WTC11 (cell line): ENCODE measurements at regions of chr10 and their contacts with region 1.

Region 1: DNA sequence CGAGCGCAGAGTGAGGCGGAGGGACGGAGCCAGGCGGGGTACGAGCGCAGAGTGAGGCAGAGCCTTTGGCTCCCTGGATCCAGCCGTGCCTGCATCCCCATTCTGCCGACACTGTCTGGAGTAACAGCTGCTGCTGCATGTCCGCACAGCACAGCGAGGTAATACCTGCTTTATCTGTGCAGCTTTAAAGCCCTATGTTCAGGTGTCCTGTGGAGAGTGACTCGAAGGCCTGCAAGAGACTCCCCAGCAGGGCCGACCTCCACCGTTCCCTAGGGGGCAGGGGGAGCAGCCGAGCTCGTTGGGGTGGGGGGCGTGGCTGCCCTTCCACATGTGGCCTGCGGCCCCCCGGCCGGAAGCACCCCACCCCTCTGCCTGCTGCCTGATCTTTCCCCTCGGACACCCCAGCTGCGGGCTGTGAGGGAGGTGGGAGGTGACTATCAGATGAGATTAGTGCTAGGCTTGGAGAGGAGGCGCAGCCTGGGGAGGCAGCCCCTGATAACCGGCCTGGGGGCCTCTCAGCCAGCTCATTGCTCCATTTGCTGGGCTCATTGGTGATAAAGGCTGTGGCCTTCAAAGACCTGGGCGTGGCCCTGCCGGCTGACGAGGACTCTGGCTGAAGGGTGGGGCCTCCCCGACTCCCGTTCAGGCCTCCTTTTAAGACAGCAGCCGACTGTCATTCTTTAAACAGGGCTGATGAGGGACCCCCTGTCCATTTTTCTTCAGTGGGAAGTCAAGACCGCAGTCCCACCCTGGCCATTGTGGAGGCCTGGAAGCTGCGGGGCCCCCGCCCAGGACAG is 8.0 kb downstream of the VENTX start:
- DNase-seq: no peak
- ATAC-seq: no peak
- H3K4me3 Mint-ChIP-seq: no peak overlapping the region
- H3K27ac Mint-ChIP-seq: no peak overlapping the region
- H3K4me1 Mint-ChIP-seq: peaks cover 40% of the 10 kb centered on the region
- H3K27me3 Mint-ChIP-seq: no peaks in the 10 kb centered on the region
- CTCF ChIP-seq: no peak

Region 2: GRCh38 chr10:133210398-133211140 is 35.1 kb before region 1 on chr10:
- CTCF ChIA-PET with region 1: no interaction called
- POLR2A ChIA-PET with region 1: no interaction called
- DNase-seq: no peak
- ATAC-seq: no peak
- H3K4me3 Mint-ChIP-seq: no peak overlapping the region
- H3K27ac Mint-ChIP-seq: no peak overlapping the region
- H3K4me1 Mint-ChIP-seq: no peaks in the 10 kb centered on the region
- H3K27me3 Mint-ChIP-seq: no peaks in the 10 kb centered on the region
- CTCF ChIP-seq: no peak

Region 3: GRCh38 chr10:133267829-133268228 is 22.2 kb after region 1 on chr10:
- CTCF ChIA-PET with region 1: interaction called, 20 read pairs
- POLR2A ChIA-PET with region 1: interaction called, 3 read pairs
- DNase-seq: peak; percentile 44
- ATAC-seq: peak; percentile 49
- H3K4me3 Mint-ChIP-seq: no peak overlapping the region
- H3K27ac Mint-ChIP-seq: no peak overlapping the region
- H3K4me1 Mint-ChIP-seq: no peaks in the 10 kb centered on the region
- H3K27me3 Mint-ChIP-seq: peaks cover 13% of the 10 kb centered on the region
- CTCF ChIP-seq: no peak

Region 4: GRCh38 chr10:133278577-133279265 is 33.1 kb after region 1 on chr10:
- CTCF ChIA-PET with region 1: interaction called, 23 read pairs
- POLR2A ChIA-PET with region 1: no interaction called
- DNase-seq: no peak
- ATAC-seq: no peak
- H3K4me3 Mint-ChIP-seq: no peak overlapping the region
- H3K27ac Mint-ChIP-seq: peak overlapping the region; percentile 57
- H3K4me1 Mint-ChIP-seq: peaks cover 6% of the 10 kb centered on the region; the same call in 1 of the 2 replicates
- H3K27me3 Mint-ChIP-seq: no peaks in the 10 kb centered on the region
- CTCF ChIP-seq: no peak

Region 5: GRCh38 chr10:133308421-133309110 is 62.9 kb after region 1 on chr10 and contains the starts of genes TUBGCP2 and ZNF511:
- CTCF ChIA-PET with region 1: interaction called, 16 read pairs
- POLR2A ChIA-PET with region 1: no interaction called
- DNase-seq: peak; percentile 78
- ATAC-seq: peak; percentile 58
- H3K4me3 Mint-ChIP-seq: peak within 1 kb of the TSS; percentile 97
- H3K27ac Mint-ChIP-seq: peak within 1 kb of the TSS; percentile 93
- H3K4me1 Mint-ChIP-seq: peaks cover 15% of the 10 kb centered on the region
- H3K27me3 Mint-ChIP-seq: no peaks in the 10 kb centered on the region
- CTCF ChIP-seq: no peak
- total RNA-seq, gene TUBGCP2: 53.2 to 62.5 TPM (median 53.8 TPM) in 3 replicates
- total RNA-seq, gene ZNF511: 69.6 to 86.4 TPM (median 73.2 TPM) in 3 replicates

Region 6: GRCh38 chr10:133318494-133319127 is 73.0 kb after region 1 on chr10:
- CTCF ChIA-PET with region 1: no interaction called
- POLR2A ChIA-PET with region 1: no interaction called
- DNase-seq: peak; percentile 86
- ATAC-seq: peak; percentile 98
- H3K4me3 Mint-ChIP-seq: peak overlapping the region; percentile 58
- H3K27ac Mint-ChIP-seq: no peak overlapping the region
- H3K4me1 Mint-ChIP-seq: 0 out of 2 replicates have a peak, but pooled peaks cover 3% of the 10 kb centered on the region
- H3K27me3 Mint-ChIP-seq: peaks cover 26% of the 10 kb centered on the region
- CTCF ChIP-seq: peak; percentile 74

Region 7: DNA sequence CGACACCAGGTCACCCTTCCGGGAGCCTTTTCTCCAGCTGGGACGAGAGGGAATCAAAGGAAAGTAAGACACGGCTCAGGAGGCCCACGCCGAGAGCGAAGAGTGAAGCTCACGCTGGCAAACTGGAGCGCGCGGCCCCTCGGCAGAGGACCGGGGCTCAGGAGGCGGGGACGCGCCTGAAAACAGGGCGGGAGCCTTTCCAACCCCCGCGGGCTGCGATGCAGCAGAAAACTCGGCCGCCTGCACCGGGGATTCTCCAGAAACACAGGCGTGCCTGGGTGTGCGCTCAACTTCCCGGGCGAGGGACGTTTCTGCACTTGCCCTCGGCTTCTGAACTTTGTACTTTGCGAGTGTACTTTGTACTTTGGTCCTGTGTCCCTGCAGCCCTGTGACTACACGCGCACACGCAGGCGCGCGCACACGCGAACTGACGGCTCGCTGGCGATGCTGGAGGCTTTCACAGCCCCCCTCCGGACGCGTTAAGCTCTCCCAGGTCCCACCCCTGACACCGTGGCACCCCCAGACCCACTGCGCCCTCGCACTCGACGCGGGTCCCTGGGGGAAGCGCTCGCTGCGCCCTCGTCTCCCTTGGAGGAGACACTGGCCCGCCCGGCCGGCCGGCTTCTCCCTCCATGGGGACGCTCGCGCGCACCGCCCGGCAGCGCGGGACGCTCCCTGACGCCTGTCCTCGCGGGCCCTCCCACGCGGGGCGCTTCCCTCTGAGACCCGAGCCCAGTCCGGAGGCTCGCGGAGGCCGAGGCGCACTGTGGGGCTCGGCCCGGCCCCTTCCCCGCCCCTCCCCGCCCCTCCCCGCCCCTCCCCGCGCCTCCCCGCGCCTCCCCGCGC is 132.8 kb after region 1 on chr10:
- CTCF ChIA-PET with region 1: no interaction called
- POLR2A ChIA-PET with region 1: no interaction called
- DNase-seq: peak; percentile 57
- ATAC-seq: peak; percentile 24
- H3K4me3 Mint-ChIP-seq: peak overlapping the region; percentile 72
- H3K27ac Mint-ChIP-seq: no peak overlapping the region
- H3K4me1 Mint-ChIP-seq: no peaks in the 10 kb centered on the region
- H3K27me3 Mint-ChIP-seq: peaks cover 70% of the 10 kb centered on the region
- CTCF ChIP-seq: no peak